PC-3 (cell line): ENCODE measurements at regions of chr11 and their contacts with region 1.

Region 1: GRCh38 chr11:34379079-34379478 is 21.3 kb upstream of the ABTB2 start:
- DNase-seq: peak; percentile 94
- ATAC-seq: peak; percentile 90
- H3K4me3 ChIP-seq: peak overlapping the region; percentile 34; the same call in 1 of the 2 replicates
- H3K27ac ChIP-seq: peak overlapping the region; percentile 97
- H3K4me1 ChIP-seq: peaks cover 30% of the 10 kb centered on the region
- H3K27me3 ChIP-seq: no peaks in the 10 kb centered on the region
- CTCF ChIP-seq: no peak

Region 2: DNA sequence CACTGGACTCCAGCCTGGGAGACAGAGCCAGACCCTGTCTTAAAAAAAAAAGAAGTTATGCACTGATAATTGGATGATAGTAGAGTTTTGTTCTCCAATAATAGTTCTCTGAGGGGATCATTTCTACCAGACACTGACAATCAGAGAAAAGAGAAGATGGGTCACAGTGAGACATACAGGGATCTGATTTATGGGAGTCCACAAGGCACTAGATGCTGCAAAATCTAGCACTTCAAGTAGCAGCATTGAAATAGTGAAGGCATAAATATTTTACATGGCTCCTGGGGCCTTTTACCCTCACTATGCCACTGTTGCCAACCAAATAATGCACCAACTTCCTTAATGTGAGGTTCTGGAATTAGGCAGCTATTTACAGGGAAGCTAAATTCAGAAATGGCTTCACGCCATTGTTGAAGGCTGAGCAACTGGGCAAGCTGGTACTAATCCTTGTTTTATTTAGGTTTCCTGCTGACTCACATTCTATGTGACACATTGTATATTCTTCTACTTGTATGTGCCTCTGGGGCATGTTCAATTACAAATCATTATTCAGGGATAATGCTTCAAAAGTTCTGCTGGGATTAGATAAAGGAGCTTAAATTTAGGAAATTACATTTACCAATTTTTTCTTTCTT is 17.0 kb after region 1 on chr11:
- CTCF ChIA-PET with region 1: no interaction called
- POLR2A ChIA-PET with region 1: interaction called, 3 read pairs
- intact Hi-C with region 1: loop called (anchors 1 kb)
- DNase-seq: peak; percentile 89
- ATAC-seq: peak; percentile 100
- H3K4me3 ChIP-seq: no peak overlapping the region
- H3K27ac ChIP-seq: peak overlapping the region; percentile 77
- H3K4me1 ChIP-seq: peaks cover 30% of the 10 kb centered on the region
- H3K27me3 ChIP-seq: no peaks in the 10 kb centered on the region
- CTCF ChIP-seq: no peak

Region 3: GRCh38 chr11:34445956-34446355 is 66.9 kb after region 1 on chr11:
- CTCF ChIA-PET with region 1: interaction called, 12 read pairs
- POLR2A ChIA-PET with region 1: no interaction called
- intact Hi-C with region 1: no loop called
- DNase-seq: no peak
- ATAC-seq: no peak
- H3K4me3 ChIP-seq: no peak overlapping the region
- H3K27ac ChIP-seq: no peak overlapping the region
- H3K4me1 ChIP-seq: peaks cover 16% of the 10 kb centered on the region
- H3K27me3 ChIP-seq: no peaks in the 10 kb centered on the region
- CTCF ChIP-seq: no peak